ENCODE measurements at regions of chr2 and their contacts with region 1.

Region 1: GRCh38 chr2:112658820-112659667 is 13.3 kb downstream of the SLC20A1 start:
- DNase-seq: no peak
- ATAC-seq: peak; percentile 53
- H3K4me3 ChIP-seq: no peak overlapping the region
- H3K27ac ChIP-seq: peak overlapping the region; percentile 44; the same call in 2 of the 3 replicates
- H3K4me1 ChIP-seq: peaks cover 0 to 32% of the 10 kb centered on the region in 2 experiments; a peak in 4 of 5 replicates
- H3K27me3 ChIP-seq: no peaks in the 10 kb centered on the region
- CTCF ChIP-seq: peak in 1 of 3 experiments; percentile 11; a peak in 1 of 6 replicates
- EP300 ChIP-seq: no peak
- POLR2A ChIP-seq: peak; percentile 35; the same call in 1 of the 2 replicates
- RAD21 ChIP-seq: no peak

Region 2: GRCh38 chr2:112671801-112672200 is 12.8 kb after region 1 on chr2:
- CTCF ChIA-PET with region 1: no interaction called
- POLR2A ChIA-PET with region 1: interaction called, 13 read pairs
- in situ Hi-C with region 1: no loop called
- intact Hi-C with region 1: no loop called
- DNase-seq: no peak
- ATAC-seq: no peak
- H3K4me3 ChIP-seq: no peak overlapping the region
- H3K27ac ChIP-seq: no peak overlapping the region
- H3K4me1 ChIP-seq: peaks cover 7 to 27% of the 10 kb centered on the region in 2 experiments; a peak in 4 of 5 replicates
- H3K27me3 ChIP-seq: no peaks in the 10 kb centered on the region
- CTCF ChIP-seq: no peak
- EP300 ChIP-seq: no peak
- POLR2A ChIP-seq: no peak
- RAD21 ChIP-seq: no peak